Activated CD8-positive, alpha-beta T cell treated with anti-CD3 and anti-CD28 coated beads for 36 hours (primary cell): ENCODE measurements at regions of chr13 and their contacts with region 1.

Region 1: GRCh38 chr13:26698392-26699196 is 62.0 kb downstream of the GPR12 start:
- DNase-seq: peak; percentile 87
- ATAC-seq: peak; percentile 79
- H3K4me3 Mint-ChIP-seq: no peak overlapping the region
- H3K27ac Mint-ChIP-seq: no peak overlapping the region
- H3K4me1 Mint-ChIP-seq: no peaks in the 10 kb centered on the region
- H3K27me3 Mint-ChIP-seq: peaks cover 2% of the 10 kb centered on the region
- CTCF ChIP-seq: peak; percentile 90

Region 2: DNA sequence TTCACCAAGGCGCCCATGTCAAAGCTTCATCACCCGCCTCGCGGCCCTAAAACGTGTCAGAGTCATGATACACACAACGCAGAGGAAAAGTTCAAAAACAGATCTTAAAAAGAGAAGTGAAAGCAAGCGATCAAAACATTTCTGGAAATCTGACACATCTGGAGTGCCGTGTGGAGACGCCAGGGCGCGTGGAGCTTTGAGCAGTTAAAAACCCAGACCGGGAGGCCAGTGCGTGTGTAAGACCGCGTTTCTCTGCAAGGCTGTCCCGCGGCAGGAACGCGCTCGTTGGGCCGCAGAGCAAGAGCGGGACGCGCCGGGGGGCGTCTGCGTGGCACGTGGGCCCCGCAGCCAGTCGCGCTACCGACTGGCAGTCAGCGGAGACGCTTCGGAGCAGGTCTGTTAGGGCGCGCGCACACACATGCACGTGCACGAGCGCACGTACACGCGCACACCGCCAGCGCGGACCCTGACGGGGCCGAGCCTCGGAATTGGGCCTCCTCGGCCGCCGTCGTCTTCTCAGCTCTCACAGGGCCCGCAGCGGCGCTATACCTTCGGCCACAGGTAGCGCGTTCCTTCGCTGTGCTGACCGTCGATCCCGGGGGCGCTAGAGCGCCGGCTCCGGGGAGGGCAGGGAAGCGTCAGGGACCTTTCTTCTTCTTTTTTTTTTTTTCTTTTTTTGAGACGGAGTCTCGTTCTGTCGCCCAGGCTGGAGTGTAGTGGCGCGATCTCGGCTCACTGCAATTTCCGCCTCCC is 512.3 kb before region 1 on chr13:
- CTCF ChIA-PET with region 1: interaction called, 110 read pairs
- POLR2A ChIA-PET with region 1: interaction called, 8 read pairs
- intact Hi-C with region 1: loop called (anchors 2 kb)
- DNase-seq: peak; percentile 93
- ATAC-seq: peak; percentile 88
- H3K4me3 Mint-ChIP-seq: peak overlapping the region; percentile 78
- H3K27ac Mint-ChIP-seq: peak overlapping the region; percentile 89
- H3K4me1 Mint-ChIP-seq: peaks cover 28% of the 10 kb centered on the region
- H3K27me3 Mint-ChIP-seq: no peaks in the 10 kb centered on the region
- CTCF ChIP-seq: peak; percentile 49

Region 3: GRCh38 chr13:26502826-26503225 is 195.8 kb before region 1 on chr13:
- CTCF ChIA-PET with region 1: interaction called, 11 read pairs
- POLR2A ChIA-PET with region 1: no interaction called
- intact Hi-C with region 1: no loop called
- DNase-seq: peak; percentile 52
- ATAC-seq: peak; percentile 93
- H3K4me3 Mint-ChIP-seq: no peak overlapping the region
- H3K27ac Mint-ChIP-seq: no peak overlapping the region
- H3K4me1 Mint-ChIP-seq: peaks cover 13% of the 10 kb centered on the region
- H3K27me3 Mint-ChIP-seq: peaks cover under 1% of the 10 kb centered on the region
- CTCF ChIP-seq: peak; percentile 32

Region 4: GRCh38 chr13:26658448-26659385 is 39.9 kb before region 1 on chr13:
- CTCF ChIA-PET with region 1: interaction called, 17 read pairs
- POLR2A ChIA-PET with region 1: no interaction called
- intact Hi-C with region 1: no loop called
- DNase-seq: no peak
- ATAC-seq: no peak
- H3K4me3 Mint-ChIP-seq: no peak overlapping the region
- H3K27ac Mint-ChIP-seq: no peak overlapping the region
- H3K4me1 Mint-ChIP-seq: no peaks in the 10 kb centered on the region
- H3K27me3 Mint-ChIP-seq: peaks cover 9% of the 10 kb centered on the region
- CTCF ChIP-seq: no peak

Region 5: DNA sequence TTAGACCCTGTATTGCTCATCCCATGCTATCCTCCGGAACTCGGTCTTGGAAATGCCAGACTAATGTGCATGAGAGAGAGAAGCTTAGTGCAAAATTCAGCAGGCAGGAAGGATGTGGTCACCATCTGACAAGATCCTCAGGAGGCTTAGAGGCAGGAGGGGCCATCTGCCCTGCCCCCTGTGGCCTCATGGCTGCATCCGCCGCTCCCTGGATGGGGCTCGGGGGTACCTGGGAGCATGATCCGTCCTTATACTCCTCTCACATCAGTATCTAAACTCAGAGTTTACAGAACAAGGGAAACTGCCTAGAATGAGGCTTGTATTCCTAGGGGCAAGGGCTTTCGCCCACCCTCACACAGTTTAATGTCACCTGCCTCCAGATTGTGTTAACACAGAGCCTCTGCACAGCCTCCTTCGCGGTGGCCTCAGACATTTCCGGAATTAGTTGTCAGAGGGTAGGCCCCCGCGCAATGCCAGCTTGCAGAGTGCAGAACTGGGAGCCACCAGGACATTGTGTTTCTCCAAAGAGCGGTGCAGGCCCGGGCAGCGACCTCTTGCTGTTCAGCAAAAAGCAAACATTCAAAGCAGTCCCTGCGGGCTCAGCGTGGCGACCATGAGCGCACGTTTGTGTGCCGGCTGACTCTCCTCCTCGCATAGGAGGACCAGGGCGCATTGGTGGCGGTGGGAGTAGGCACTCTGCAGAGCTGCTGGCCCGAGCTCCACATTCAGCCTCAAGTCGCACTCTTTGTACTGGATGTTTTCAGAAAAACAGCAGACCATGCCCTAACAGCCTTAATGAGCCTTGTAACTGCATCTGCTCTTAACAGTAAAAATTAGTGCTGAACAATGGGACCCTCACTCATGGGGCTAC is 22.9 kb after region 1 on chr13:
- CTCF ChIA-PET with region 1: interaction called, 19 read pairs
- POLR2A ChIA-PET with region 1: no interaction called
- intact Hi-C with region 1: no loop called
- DNase-seq: peak; percentile 71
- ATAC-seq: peak; percentile 90
- H3K4me3 Mint-ChIP-seq: peak overlapping the region; percentile 66
- H3K27ac Mint-ChIP-seq: peak overlapping the region; percentile 88
- H3K4me1 Mint-ChIP-seq: peaks cover 27% of the 10 kb centered on the region
- H3K27me3 Mint-ChIP-seq: no peaks in the 10 kb centered on the region
- CTCF ChIP-seq: no peak

Region 6: GRCh38 chr13:27182844-27183497 is 484.4 kb after region 1 on chr13:
- CTCF ChIA-PET with region 1: no interaction called
- POLR2A ChIA-PET with region 1: no interaction called
- intact Hi-C with region 1: no loop called
- DNase-seq: no peak
- ATAC-seq: no peak
- H3K4me3 Mint-ChIP-seq: no peak overlapping the region
- H3K27ac Mint-ChIP-seq: no peak overlapping the region
- H3K4me1 Mint-ChIP-seq: no peaks in the 10 kb centered on the region
- H3K27me3 Mint-ChIP-seq: peaks cover 2% of the 10 kb centered on the region
- CTCF ChIP-seq: no peak